ENCODE measurements at regions of chr9 and their contacts with region 1.

Region 1: GRCh38 chr9:135085830-135086546 is 1.5 kb upstream of the OLFM1 start:
- DNase-seq: no peak
- H3K4me3 ChIP-seq: peak overlapping the region in 2 of 4 donors; percentile 50 to 68
- H3K27ac ChIP-seq: peak overlapping the region in 2 of 4 donors; percentile 36 to 54
- H3K4me1 ChIP-seq: peaks cover 17 to 51% (median 22%) of the 10 kb centered on the region in 3 donors
- H3K27me3 ChIP-seq: peaks cover 9 to 91% (median 11%) of the 10 kb centered on the region in 4 donors
- CTCF ChIP-seq: peak; percentile 33 to 98 (median 92)
- POLR2A ChIP-seq: no peak

Region 2: DNA sequence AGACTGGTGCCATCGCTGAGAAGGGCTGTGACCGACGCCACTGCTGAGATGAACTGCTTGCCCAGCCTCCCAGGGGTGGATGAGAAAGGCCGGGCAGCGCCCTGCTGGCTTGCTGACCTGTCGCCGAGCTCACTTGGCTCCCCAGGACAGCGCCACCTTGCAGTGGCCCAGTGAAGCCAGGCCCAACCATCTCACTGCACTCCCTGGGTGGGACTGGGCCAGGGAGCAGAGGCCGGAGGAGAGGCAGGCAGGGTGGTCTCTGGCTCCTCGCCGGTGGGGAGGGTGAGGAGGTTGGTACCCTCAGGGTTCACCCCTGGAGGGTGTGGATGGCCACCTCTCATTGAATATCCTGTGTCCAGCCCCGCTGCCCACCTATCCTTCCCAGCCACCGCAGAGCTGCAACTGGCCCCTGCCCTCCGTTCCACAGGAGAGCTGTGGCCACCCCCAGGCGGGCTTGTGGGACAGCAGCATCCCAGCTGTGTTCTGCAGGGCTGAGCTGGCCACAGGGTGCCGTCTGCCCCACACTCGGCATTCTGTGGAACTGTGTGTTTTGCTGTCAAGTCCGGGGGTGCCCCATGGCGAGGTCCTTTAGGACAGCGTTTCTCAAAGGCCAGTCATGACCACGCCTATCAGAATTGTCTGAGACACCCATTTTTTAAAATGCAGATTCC is 246.4 kb before region 1 on chr9:
- intact Hi-C with region 1: no loop called
- DNase-seq: no peak
- H3K4me3 ChIP-seq: no peak overlapping the region
- H3K27ac ChIP-seq: no peak overlapping the region
- H3K4me1 ChIP-seq: no peaks in the 10 kb centered on the region
- H3K27me3 ChIP-seq: no peaks in the 10 kb centered on the region
- CTCF ChIP-seq: no peak
- POLR2A ChIP-seq: no peak

Region 3: GRCh38 chr9:135035781-135036760 is 49.9 kb before region 1 on chr9:
- intact Hi-C with region 1: no loop called
- DNase-seq: no peak
- H3K4me3 ChIP-seq: no peak overlapping the region
- H3K27ac ChIP-seq: no peak overlapping the region
- H3K4me1 ChIP-seq: no peaks in the 10 kb centered on the region
- H3K27me3 ChIP-seq: peaks cover 0 to 70% (median 0%) of the 10 kb centered on the region in 4 donors
- CTCF ChIP-seq: no peak
- POLR2A ChIP-seq: no peak

Region 4: GRCh38 chr9:135343837-135344522 is 258.0 kb after region 1 on chr9:
- intact Hi-C with region 1: loop called (anchors 2 kb)
- DNase-seq: no peak
- H3K4me3 ChIP-seq: no peak overlapping the region
- H3K27ac ChIP-seq: no peak overlapping the region
- H3K4me1 ChIP-seq: peaks cover 0 to 17% (median 5%) of the 10 kb centered on the region in 3 donors
- H3K27me3 ChIP-seq: peaks cover 0 to 100% (median 0%) of the 10 kb centered on the region in 4 donors
- CTCF ChIP-seq: peak; percentile 51 to 92 (median 82)
- POLR2A ChIP-seq: no peak

Region 5: DNA sequence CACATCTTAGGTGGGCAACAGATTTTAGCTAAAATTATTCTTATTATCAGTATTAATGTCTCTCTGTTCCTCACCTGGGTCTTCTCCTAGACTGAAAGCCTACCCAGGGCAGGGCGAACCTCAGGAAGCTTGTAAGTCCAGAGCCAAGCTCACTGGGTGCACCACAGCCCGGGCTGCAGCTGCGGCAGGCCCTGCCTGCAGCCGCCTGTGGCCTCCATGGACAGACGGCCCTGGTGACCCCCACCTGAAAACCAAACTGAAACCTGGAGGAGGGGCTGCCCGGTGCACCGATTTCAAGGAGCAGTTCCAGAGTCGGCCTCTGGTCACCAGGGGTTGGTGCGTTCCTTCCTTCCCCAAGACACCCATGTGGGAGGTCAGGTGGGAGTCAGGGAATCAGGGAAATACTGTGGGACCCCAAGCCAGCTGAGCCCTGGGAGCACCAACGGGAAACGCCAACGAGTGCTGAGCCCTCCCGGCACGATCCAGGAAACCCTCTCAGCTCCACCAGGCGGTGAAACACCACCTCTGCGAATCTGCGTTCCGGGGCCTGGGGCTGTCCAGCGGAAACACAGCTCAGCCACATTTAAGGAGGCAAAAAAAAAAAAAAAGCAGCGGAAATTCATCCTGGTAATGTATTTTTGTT is 325.0 kb after region 1 on chr9:
- intact Hi-C with region 1: loop called (anchors 5 kb)
- DNase-seq: no peak
- H3K4me3 ChIP-seq: no peak overlapping the region
- H3K27ac ChIP-seq: no peak overlapping the region
- H3K4me1 ChIP-seq: peaks cover 3 to 6% (median 5%) of the 10 kb centered on the region in 3 donors
- H3K27me3 ChIP-seq: peaks cover 0 to 87% (median 0%) of the 10 kb centered on the region in 4 donors
- CTCF ChIP-seq: no peak
- POLR2A ChIP-seq: no peak